Activated CD4-positive, alpha-beta T cell treated with anti-CD3 and anti-CD28 coated beads, Interleukin-2, amount 10 ng/mL, durations not matched to agents 7 days and 5 days (primary cell): ENCODE measurements at regions of chr11 and their contacts with region 1.

Region 1: DNA sequence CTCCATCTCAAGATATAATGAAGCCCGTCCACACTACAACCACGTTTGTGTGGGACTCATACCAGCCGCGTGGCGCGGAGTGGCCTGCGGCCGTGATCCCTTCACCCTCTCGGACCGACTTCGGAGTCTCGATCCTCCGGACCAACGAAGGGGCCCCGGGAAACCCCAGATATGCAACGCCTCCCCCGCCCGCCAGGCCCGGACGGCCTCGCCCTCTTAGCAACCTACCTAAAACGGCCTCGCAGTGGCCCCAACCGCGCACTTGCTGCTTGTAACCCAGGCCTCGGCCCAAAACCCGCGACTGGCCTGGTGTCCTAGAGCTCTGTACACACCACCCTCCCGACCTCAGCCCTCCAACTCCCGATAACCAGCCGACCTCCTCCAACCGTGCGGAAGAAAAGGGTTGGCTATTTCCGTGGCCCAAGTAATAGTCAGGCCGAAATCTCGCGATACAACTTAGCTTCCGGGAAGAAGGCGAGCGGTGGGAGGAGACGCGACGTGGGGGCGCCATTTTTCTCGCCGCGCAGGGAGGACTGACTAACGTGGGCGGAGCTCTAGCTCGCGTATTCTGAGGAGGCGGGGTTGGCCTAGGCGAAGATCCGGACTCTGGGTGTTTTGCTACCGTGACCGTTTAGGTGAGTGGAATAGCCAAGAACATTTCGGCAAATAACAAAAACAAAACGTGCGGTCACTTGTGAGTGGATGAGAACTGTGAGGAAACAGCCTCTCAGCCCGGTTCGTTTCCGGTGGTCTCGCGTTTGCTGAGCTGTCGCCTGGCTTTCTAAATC is at the starts of genes C11orf54 and TAF1D:
- DNase-seq: peak; percentile 99
- H3K4me3 Mint-ChIP-seq: peak within 1 kb of the TSS; percentile 99
- H3K27ac Mint-ChIP-seq: peak within 1 kb of the TSS; percentile 99
- H3K4me1 Mint-ChIP-seq: peaks cover 52% of the 10 kb centered on the region
- H3K27me3 Mint-ChIP-seq: no peaks in the 10 kb centered on the region
- total RNA-seq, gene C11orf54: 14.5 to 22.5 TPM
- total RNA-seq, gene TAF1D: 159 to 166 TPM

Region 2: GRCh38 chr11:93784152-93784934 is 43.1 kb after region 1 on chr11 and contains the start of gene MED17:
- CTCF ChIA-PET with region 1: interaction called, 4 read pairs
- POLR2A ChIA-PET with region 1: interaction called, 33 read pairs
- DNase-seq: peak; percentile 92
- H3K4me3 Mint-ChIP-seq: peak within 1 kb of the TSS; percentile 95
- H3K27ac Mint-ChIP-seq: peak within 1 kb of the TSS; percentile 96
- H3K4me1 Mint-ChIP-seq: peaks cover 49% of the 10 kb centered on the region
- H3K27me3 Mint-ChIP-seq: no peaks in the 10 kb centered on the region
- total RNA-seq, gene MED17: 40.7 to 42.1 TPM